Activated T-helper 2 cell treated with anti-CD3 and anti-CD28 coated beads, Interferon-gamma antibody, Interleukin-2, Interleukin-4, amounts not matched to agents 10 μg/mL and 5 μg/mL and 100 μg/mL, durations not matched to agents 14 hours and 24 hours and 36 hours (primary cell): ENCODE measurements at regions of chr12 and their contacts with region 1.

Region 1: GRCh38 chr12:24778486-24779304 is 170.2 kb downstream of the BCAT1 start:
- DNase-seq: no peak
- H3K4me3 Mint-ChIP-seq: no peak overlapping the region
- H3K27ac Mint-ChIP-seq: no peak overlapping the region
- H3K4me1 Mint-ChIP-seq: peaks cover 3% of the 10 kb centered on the region
- H3K27me3 Mint-ChIP-seq: peaks cover 11% of the 10 kb centered on the region

Region 2: GRCh38 chr12:23204933-23205778 is 1573.5 kb before region 1 on chr12:
- intact Hi-C with region 1: loop called (anchors 10 kb)
- DNase-seq: no peak
- H3K4me3 Mint-ChIP-seq: no peak overlapping the region
- H3K27ac Mint-ChIP-seq: no peak overlapping the region
- H3K4me1 Mint-ChIP-seq: no peaks in the 10 kb centered on the region
- H3K27me3 Mint-ChIP-seq: no peaks in the 10 kb centered on the region

Region 3: GRCh38 chr12:24679126-24679525 is 99.6 kb before region 1 on chr12:
- intact Hi-C with region 1: loop called (anchors 5 kb)
- DNase-seq: no peak
- H3K4me3 Mint-ChIP-seq: no peak overlapping the region
- H3K27ac Mint-ChIP-seq: no peak overlapping the region
- H3K4me1 Mint-ChIP-seq: no peaks in the 10 kb centered on the region
- H3K27me3 Mint-ChIP-seq: no peaks in the 10 kb centered on the region